Left colon (tissue), 2 donors: ENCODE measurements at regions of chr3 and their contacts with region 1.

Region 1: DNA sequence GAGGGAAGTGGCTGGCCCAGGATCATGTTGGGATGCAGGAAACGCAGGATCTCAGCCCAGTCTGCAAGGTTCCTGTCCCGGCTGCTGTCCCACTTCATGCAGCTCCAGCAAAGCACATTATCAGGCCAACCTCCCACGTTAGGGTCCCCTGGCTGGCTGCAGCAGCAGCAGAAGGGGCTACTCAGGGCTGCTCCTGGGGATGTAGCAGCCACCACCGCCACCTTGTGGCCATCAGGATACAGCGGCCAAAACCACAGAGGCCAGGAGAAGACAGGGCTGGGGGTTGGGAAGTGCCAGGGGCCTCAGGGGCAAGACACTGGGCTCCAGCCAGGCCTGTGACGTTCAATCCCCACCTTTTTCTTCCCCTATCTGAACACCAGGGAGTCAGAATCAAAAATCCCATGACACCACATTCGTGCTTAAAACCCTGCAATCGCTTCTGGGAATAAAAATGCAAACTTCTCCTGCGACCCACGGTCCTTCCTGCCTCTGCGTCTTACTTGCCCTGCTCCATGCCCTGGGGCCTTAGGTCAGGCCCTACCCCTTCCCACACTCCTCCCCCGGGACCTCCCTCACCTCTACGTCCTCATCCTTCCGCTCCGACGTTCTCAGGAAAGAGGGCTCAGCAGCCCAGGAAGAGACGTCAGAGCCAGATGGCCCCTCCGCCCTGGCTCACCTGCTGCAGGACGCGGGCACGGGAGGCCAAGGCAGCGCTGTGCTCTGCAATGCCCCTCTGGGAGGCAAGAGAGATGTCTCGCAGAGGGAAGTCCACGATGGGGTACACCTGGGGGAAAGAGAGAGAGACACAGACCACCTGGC is 21.5 kb downstream of the SSUH2 start:
- DNase-seq: peak; percentile 50 to 75
- ATAC-seq: peak; percentile 91

Region 2: GRCh38 chr3:8441969-8442559 is 181.0 kb before region 1 on chr3:
- intact Hi-C with region 1: loop called (anchors 2 to 10 kb)
- DNase-seq: no peak
- ATAC-seq: peak; percentile 21